Activated CD8-positive, alpha-beta T cell treated with anti-CD3 and anti-CD28 coated beads, Interleukin-2, amount 10 ng/mL, durations not matched to agents 7 days and 5 days (primary cell): ENCODE measurements at regions of chr6 and their contacts with region 1.

Region 1: GRCh38 chr6:27608916-27609883 is 136.3 kb upstream of the ZNF184 start:
- DNase-seq: peak; percentile 49
- ATAC-seq: no peak
- H3K4me3 Mint-ChIP-seq: no peak overlapping the region
- H3K27ac Mint-ChIP-seq: no peak overlapping the region
- H3K4me1 Mint-ChIP-seq: peaks cover 21% of the 10 kb centered on the region
- H3K27me3 Mint-ChIP-seq: peaks cover 23% of the 10 kb centered on the region

Region 2: GRCh38 chr6:27532820-27533538 is 76.2 kb before region 1 on chr6:
- CTCF ChIA-PET with region 1: no interaction called
- POLR2A ChIA-PET with region 1: no interaction called
- DNase-seq: no peak
- ATAC-seq: no peak
- H3K4me3 Mint-ChIP-seq: no peak overlapping the region
- H3K27ac Mint-ChIP-seq: no peak overlapping the region
- H3K4me1 Mint-ChIP-seq: no peaks in the 10 kb centered on the region
- H3K27me3 Mint-ChIP-seq: peaks cover 30% of the 10 kb centered on the region

Region 3: GRCh38 chr6:27630727-27631608 is 21.8 kb after region 1 on chr6:
- CTCF ChIA-PET with region 1: interaction called, 14 read pairs
- POLR2A ChIA-PET with region 1: no interaction called
- DNase-seq: peak; percentile 51
- ATAC-seq: peak; percentile 75
- H3K4me3 Mint-ChIP-seq: peak overlapping the region; percentile 68
- H3K27ac Mint-ChIP-seq: no peak overlapping the region
- H3K4me1 Mint-ChIP-seq: peaks cover 16% of the 10 kb centered on the region
- H3K27me3 Mint-ChIP-seq: peaks cover 54% of the 10 kb centered on the region

Region 4: DNA sequence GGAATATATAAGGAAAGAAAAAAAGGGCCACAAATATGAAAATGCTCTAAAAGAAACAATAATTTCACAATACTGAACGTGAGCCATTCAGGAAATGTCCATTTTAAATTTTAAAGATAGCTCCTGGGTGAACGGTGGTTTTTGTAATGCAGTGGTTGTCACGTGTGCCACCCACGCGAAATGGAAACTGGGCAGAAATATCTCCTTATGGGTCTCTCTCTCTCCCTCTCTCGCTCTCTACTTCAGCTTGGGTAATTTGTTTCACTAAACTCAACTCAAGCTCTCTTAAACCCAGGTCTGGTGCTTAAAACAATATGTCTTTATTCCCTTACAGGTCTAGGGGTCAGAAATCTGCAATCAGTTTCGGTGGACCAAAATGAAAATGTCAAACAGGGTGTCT is 152.2 kb after region 1 on chr6:
- CTCF ChIA-PET with region 1: no interaction called
- POLR2A ChIA-PET with region 1: no interaction called
- DNase-seq: no peak
- ATAC-seq: no peak
- H3K4me3 Mint-ChIP-seq: no peak overlapping the region
- H3K27ac Mint-ChIP-seq: no peak overlapping the region
- H3K4me1 Mint-ChIP-seq: peaks cover 21% of the 10 kb centered on the region
- H3K27me3 Mint-ChIP-seq: peaks cover 5% of the 10 kb centered on the region